Tibial artery (tissue), 4 donors: ENCODE measurements at regions of chr15 and their contacts with region 1.

Region 1: GRCh38 chr15:41660235-41661077 is at the start of gene MGA:
- DNase-seq: peak; percentile 82 to 92
- H3K4me3 ChIP-seq: peak within 1 kb of the TSS; percentile 53 to 62
- H3K27ac ChIP-seq: peak within 1 kb of the TSS; percentile 75 to 82
- H3K4me1 ChIP-seq: peaks cover 0 to 32% (median 14%) of the 10 kb centered on the region in 4 donors
- H3K27me3 ChIP-seq: no peaks in the 10 kb centered on the region
- CTCF ChIP-seq: no peak

Region 2: DNA sequence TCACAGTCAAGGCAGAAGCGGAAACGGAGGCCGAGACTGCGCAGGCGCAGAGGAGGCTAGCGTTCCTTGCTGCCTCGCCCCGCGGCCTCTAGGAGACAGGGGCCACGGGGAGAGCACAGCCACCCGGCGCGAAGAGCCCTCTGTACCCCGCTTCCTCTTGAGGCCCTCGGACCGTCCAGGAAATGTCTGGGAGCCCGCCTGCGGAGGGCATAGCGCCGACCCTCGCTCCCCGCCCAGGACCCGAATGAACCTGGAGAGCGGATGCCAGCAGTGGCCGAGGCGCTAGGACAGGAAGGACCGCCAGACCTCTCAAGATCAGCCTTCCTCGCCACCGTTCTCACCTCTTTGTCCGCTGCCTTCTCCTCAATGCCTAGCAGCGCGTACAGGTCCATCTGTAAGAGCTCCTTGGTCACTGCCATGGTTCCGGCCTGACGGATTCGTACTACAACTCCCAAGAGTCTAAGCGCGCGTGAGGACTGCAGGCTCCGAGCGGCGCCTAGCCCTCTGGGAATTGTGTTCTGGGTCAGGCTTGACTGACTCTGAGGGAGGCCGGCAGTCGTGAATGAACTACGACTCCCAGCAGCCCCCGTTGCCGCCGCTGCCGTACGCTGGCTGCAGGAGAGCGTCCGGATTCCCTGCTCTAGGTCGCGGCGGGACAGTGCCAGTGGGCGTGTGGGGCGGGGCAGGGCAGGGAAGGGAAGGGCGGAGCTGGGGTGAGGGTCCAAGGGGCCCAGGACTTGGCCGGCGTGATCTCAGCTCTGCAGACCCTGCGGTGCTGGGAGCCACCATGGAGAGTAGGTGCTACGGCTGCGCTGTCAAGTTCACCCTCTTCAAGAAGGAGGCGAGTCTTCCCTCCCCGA is 853.2 kb before region 1 on chr15 and contains the starts of genes DNAJC17 and ZFYVE19:
- intact Hi-C with region 1: loop called (anchors 10 kb)
- DNase-seq: peak; percentile 98
- H3K4me3 ChIP-seq: peak within 1 kb of the TSS; percentile 69 to 96
- H3K27ac ChIP-seq: peak within 1 kb of the TSS; percentile 87 to 98
- H3K4me1 ChIP-seq: peaks cover 0 to 29% (median 16%) of the 10 kb centered on the region in 4 donors
- H3K27me3 ChIP-seq: no peaks in the 10 kb centered on the region
- CTCF ChIP-seq: no peak

Region 3: DNA sequence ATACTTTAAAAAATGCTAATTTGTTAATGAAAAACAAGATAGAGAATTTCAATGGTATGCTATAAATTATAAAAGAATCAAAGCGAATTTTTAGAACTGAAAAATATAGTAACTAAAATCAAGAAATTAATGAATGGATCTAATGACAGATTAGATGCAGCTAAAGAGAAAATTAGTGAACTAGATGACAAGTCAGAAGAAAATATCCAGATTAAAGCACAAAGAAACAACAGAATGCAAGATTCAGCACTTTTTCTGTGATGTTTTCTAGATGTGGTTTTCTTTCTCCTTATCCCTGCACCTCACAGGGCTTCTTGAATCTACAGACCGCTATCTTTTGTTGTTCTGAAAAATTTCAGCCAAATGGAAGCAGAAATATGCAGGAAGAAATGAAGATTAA is 598.8 kb before region 1 on chr15:
- intact Hi-C with region 1: no loop called
- DNase-seq: no peak
- H3K4me3 ChIP-seq: no peak overlapping the region
- H3K27ac ChIP-seq: no peak overlapping the region
- H3K4me1 ChIP-seq: no peaks in the 10 kb centered on the region
- H3K27me3 ChIP-seq: no peaks in the 10 kb centered on the region
- CTCF ChIP-seq: no peak

Region 4: GRCh38 chr15:41621200-41622193 is 39.0 kb before region 1 on chr15:
- intact Hi-C with region 1: loop called (anchors 5 kb)
- DNase-seq: peak; percentile 62 to 87
- H3K4me3 ChIP-seq: peak overlapping the region; percentile 61 to 76
- H3K27ac ChIP-seq: peak overlapping the region; percentile 78 to 81
- H3K4me1 ChIP-seq: peaks cover 0 to 6% (median 2%) of the 10 kb centered on the region in 4 donors
- H3K27me3 ChIP-seq: no peaks in the 10 kb centered on the region
- CTCF ChIP-seq: no peak